GM12878 (cell line): ENCODE measurements at regions of chrX and their contacts with region 1.

Region 1: GRCh38 chrX:24767557-24767956 is 73.8 kb downstream of the POLA1 start:
- DNase-seq: no peak
- ATAC-seq: no peak
- H3K4me3 ChIP-seq: no peak overlapping the region
- H3K27ac ChIP-seq: no peak overlapping the region
- H3K4me1 ChIP-seq: no peaks in the 10 kb centered on the region
- H3K27me3 ChIP-seq: no peaks in the 10 kb centered on the region
- CTCF ChIP-seq: no peak
- EP300 ChIP-seq: no peak
- POLR2A ChIP-seq: no peak
- RAD21 ChIP-seq: no peak

Region 2: GRCh38 chrX:23168291-23168690 is 1599.3 kb before region 1 on chrX:
- CTCF ChIA-PET with region 1: no interaction called
- POLR2A ChIA-PET with region 1: no interaction called
- RAD21 ChIA-PET with region 1: no interaction called
- SMC1A ChIA-PET with region 1: no interaction called
- in situ Hi-C with region 1: no loop called
- intact Hi-C with region 1: no loop called
- DNase-seq: no peak
- ATAC-seq: no peak
- H3K4me3 ChIP-seq: no peak overlapping the region
- H3K27ac ChIP-seq: no peak overlapping the region
- H3K4me1 ChIP-seq: no peaks in the 10 kb centered on the region
- H3K27me3 ChIP-seq: no peaks in the 10 kb centered on the region
- CTCF ChIP-seq: no peak
- EP300 ChIP-seq: no peak
- POLR2A ChIP-seq: no peak
- RAD21 ChIP-seq: no peak

Region 3: GRCh38 chrX:24748202-24748843 is 19.2 kb before region 1 on chrX:
- CTCF ChIA-PET with region 1: interaction called, 10 read pairs
- POLR2A ChIA-PET with region 1: no interaction called
- RAD21 ChIA-PET with region 1: no interaction called
- SMC1A ChIA-PET with region 1: interaction called, 4 read pairs
- in situ Hi-C with region 1: no loop called
- intact Hi-C with region 1: no loop called
- DNase-seq: no peak
- ATAC-seq: no peak
- H3K4me3 ChIP-seq: no peak overlapping the region
- H3K27ac ChIP-seq: no peak overlapping the region
- H3K4me1 ChIP-seq: no peaks in the 10 kb centered on the region
- H3K27me3 ChIP-seq: no peaks in the 10 kb centered on the region
- CTCF ChIP-seq: no peak
- EP300 ChIP-seq: no peak
- POLR2A ChIP-seq: no peak
- RAD21 ChIP-seq: no peak

Region 4: DNA sequence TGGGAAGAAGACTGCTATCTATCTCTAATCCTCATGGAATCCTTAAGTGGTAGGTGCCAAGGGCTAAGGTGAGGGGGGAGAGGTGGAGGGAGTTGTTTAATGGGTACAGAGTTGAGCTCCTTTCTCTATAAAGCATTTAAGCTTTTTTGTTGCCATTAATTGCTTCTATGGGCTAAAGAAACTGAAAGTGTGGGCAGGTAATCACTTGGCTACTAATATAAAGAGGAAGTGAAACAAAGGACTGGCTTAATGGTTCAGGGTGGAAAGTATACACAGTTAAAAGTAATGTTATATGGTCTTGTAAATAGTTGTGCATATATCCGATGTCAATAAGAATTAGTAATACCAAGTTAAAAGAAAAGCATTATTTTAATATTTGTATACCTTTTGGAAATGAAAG is 10.1 kb after region 1 on chrX:
- CTCF ChIA-PET with region 1: interaction called, 10 read pairs
- POLR2A ChIA-PET with region 1: interaction called, 3 read pairs
- RAD21 ChIA-PET with region 1: no interaction called
- SMC1A ChIA-PET with region 1: interaction called, 12 read pairs
- in situ Hi-C with region 1: no loop called
- intact Hi-C with region 1: no loop called
- DNase-seq: peak; percentile 45
- ATAC-seq: peak; percentile 98
- H3K4me3 ChIP-seq: no peak overlapping the region
- H3K27ac ChIP-seq: no peak overlapping the region
- H3K4me1 ChIP-seq: peaks cover 13% of the 10 kb centered on the region
- H3K27me3 ChIP-seq: no peaks in the 10 kb centered on the region
- CTCF ChIP-seq: no peak
- EP300 ChIP-seq: peak; percentile 11 to 90; a peak in 2 of 4 replicates
- POLR2A ChIP-seq: no peak
- RAD21 ChIP-seq: no peak